ENCODE measurements at regions of chr9 and their contacts with region 1.

Region 1: GRCh38 chr9:8895861-8896224 is 1096.3 kb upstream of the DMAC1 start:
- DNase-seq: peak in 1 of 2 experiments; percentile 36
- H3K4me3 ChIP-seq: no peak overlapping the region
- H3K4me3 Mint-ChIP-seq: no peak overlapping the region
- H3K27ac Mint-ChIP-seq: no peak overlapping the region
- H3K4me1 ChIP-seq: no peaks in the 10 kb centered on the region
- H3K4me1 Mint-ChIP-seq: no peaks in the 10 kb centered on the region
- H3K27me3 ChIP-seq: no peaks in the 10 kb centered on the region
- H3K27me3 Mint-ChIP-seq: no peaks in the 10 kb centered on the region
- CTCF ChIP-seq: peak; percentile 41 to 55

Region 2: DNA sequence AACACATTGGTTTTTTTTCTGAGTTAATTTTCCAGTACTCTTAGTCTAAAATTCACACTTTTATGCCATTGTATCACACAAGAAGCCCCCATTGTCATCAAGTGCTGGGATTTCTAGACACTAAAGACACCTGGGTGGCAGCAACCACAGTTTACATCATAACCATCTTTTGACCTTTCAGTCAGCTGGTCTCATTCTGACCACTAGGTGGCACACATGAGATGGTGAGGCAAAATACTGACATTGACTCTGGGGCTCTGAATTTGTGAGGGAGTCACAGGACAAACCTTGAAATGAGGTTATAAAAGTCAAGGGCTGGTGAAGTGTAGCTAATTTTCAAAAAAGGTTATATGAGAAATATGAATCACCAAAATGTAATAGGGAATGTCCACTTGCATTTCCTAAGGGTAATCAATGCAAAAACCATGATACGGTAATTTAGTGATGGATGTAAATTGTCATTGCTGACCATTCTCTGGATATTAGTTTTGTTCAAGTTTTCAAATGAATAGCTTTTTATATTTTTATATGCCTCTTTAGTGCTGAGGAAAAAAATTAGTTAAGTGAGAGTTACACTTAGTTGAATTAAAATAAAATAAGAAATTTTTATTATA is 1325.6 kb before region 1 on chr9:
- CTCF ChIA-PET with region 1: no interaction called
- POLR2A ChIA-PET with region 1: no interaction called
- intact Hi-C with region 1: loop called (anchors 5 kb)
- DNase-seq: peak; percentile 55 to 73
- H3K4me3 ChIP-seq: no peak overlapping the region
- H3K4me3 Mint-ChIP-seq: no peak overlapping the region
- H3K27ac Mint-ChIP-seq: no peak overlapping the region
- H3K4me1 ChIP-seq: no peaks in the 10 kb centered on the region
- H3K4me1 Mint-ChIP-seq: no peaks in the 10 kb centered on the region
- H3K27me3 ChIP-seq: no peaks in the 10 kb centered on the region
- H3K27me3 Mint-ChIP-seq: no peaks in the 10 kb centered on the region
- CTCF ChIP-seq: peak; percentile 69

Region 3: DNA sequence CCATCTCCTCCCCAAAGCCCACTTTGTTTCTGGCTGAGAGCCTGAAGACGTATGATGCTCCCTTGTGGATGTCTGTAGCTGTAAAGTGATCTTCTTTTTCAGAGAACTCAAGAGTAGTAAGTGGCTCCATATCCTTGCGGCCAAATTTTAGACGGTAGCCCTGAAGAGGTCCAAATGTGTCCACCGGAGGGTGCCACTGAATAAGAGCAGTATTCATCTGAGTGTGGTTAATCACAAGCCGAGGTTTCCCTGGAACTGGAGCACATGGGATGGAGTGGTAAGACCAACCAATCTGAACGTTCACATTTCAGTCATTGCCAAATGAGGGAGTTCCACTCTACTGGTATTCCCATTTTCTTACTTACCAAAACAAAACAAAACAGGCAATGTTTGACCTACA is 409.7 kb before region 1 on chr9:
- CTCF ChIA-PET with region 1: no interaction called
- POLR2A ChIA-PET with region 1: no interaction called
- intact Hi-C with region 1: loop called (anchors 2 kb)
- DNase-seq: peak; percentile 33 to 36
- H3K4me3 ChIP-seq: no peak overlapping the region
- H3K4me3 Mint-ChIP-seq: no peak overlapping the region
- H3K27ac Mint-ChIP-seq: no peak overlapping the region
- H3K4me1 ChIP-seq: no peaks in the 10 kb centered on the region
- H3K4me1 Mint-ChIP-seq: no peaks in the 10 kb centered on the region
- H3K27me3 ChIP-seq: no peaks in the 10 kb centered on the region
- H3K27me3 Mint-ChIP-seq: no peaks in the 10 kb centered on the region
- CTCF ChIP-seq: no peak

Region 4: DNA sequence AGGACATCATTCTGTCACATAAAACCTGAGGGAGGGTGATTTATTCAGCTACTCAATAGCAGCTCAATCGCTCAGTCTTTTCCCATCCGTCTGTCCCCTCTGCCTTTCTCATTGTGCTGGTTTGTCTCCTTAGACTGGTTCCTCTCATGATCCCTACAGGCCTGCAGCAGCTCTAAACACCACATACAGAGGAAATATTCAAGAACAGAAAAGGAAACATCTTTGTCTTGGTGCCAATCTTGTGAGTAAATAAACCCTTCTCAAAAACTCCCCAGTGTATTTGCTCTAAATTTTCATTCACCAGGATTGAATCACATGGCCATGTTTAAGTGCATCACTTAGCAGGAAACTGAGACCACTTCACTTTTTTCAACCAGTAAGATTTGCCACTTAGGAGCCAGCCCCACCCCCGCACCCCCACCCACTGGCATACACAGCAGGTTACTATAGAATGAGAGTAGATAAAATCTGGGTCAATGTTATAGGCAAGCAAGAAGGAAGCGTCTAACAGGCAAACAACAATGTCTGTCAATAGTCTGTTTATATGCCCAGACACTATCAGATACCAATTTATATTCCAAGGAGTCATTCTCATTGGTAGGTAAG is 200.8 kb before region 1 on chr9:
- CTCF ChIA-PET with region 1: no interaction called
- POLR2A ChIA-PET with region 1: no interaction called
- intact Hi-C with region 1: loop called (anchors 1 kb)
- DNase-seq: no peak
- H3K4me3 ChIP-seq: no peak overlapping the region
- H3K4me3 Mint-ChIP-seq: no peak overlapping the region
- H3K27ac Mint-ChIP-seq: no peak overlapping the region
- H3K4me1 ChIP-seq: no peaks in the 10 kb centered on the region
- H3K4me1 Mint-ChIP-seq: no peaks in the 10 kb centered on the region
- H3K27me3 ChIP-seq: no peaks in the 10 kb centered on the region
- H3K27me3 Mint-ChIP-seq: no peaks in the 10 kb centered on the region
- CTCF ChIP-seq: no peak

Measured in Caco-2 (cell line).